ENCODE measurements at regions of chr14 and their contacts with region 1.

Region 1: DNA sequence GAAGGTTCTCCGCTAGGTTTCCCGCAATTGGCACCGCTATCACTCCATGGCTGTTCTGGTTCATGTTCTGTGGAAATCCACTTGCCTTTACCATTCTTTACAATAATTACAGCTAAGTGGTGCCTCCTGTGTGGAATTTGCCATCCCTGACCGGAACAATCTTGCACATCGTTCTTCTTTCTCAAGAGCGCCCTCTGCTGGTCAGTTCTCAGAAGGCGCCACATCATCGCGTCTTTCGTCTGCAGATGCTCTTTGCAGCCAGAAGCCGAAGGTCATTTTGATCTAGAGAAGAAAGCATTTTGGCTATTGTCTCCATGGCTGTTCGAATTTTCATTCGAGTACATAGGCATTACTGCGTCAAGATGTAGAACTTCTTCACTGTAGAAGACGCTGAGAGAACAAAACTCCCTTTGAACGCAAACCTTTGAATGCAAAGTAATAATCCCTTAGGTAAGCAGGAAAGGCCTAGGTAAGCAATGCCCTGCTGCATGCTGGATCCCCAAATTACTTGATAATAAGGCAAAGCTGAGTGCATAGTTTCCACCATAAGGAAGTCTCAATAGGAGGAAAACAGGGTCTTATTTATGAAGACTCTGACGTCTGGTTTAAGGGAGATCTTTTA is 10.1 kb upstream of the RTRAF start:
- DNase-seq: peak; percentile 74 to 86 (median 82)
- ATAC-seq: peak; percentile 60 to 83 (median 80)
- H3K4me3 ChIP-seq: no peak overlapping the region
- H3K27ac ChIP-seq: peak overlapping the region in 6 of 12 donors; percentile 5 to 46 (median 22)
- H3K4me1 ChIP-seq: peaks cover 0 to 15% (median 0%) of the 10 kb centered on the region in 12 donors
- H3K27me3 ChIP-seq: no peaks in the 10 kb centered on the region
- CTCF ChIP-seq: peak; percentile 85 to 98 (median 94)
- POLR2A ChIP-seq: no peak

Region 2: DNA sequence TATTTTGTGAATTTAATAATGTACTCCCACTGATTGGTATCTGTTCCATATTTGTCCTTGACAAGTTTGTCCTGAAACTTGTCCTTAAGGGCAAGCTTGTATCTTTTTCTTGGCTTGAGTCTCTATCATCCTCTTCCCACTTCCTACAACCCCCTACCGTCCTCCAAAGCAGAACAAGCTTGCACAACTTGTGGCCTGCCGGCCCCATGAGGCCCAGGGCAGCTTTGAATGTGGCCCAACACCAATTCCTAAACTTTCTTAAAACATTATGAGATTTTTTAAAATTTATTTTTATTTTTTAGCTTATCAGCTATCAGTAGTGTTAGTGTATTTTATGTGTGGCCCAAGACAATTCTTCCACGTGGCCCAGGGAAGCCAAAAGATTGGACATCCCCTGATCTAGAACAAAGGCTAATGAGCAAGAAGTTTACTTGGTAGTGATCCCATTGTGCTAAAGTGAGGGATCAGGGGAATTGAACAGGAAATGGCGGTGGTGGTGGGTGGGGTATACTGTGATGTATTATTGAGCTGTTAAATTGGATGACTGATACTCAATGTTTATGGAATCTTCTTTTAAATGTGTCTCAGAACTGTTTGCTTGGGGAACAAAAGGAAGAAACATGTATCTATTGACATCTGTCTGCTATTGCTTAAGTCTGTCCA is 701.3 kb before region 1 on chr14:
- intact Hi-C with region 1: loop called in 8 of 10 experiments (anchors 5 to 10 kb)
- DNase-seq: no peak
- ATAC-seq: peak in 1 of 4 donors; percentile 41
- H3K4me3 ChIP-seq: no peak overlapping the region
- H3K27ac ChIP-seq: peak overlapping the region in 1 of 12 donors; percentile 48
- H3K4me1 ChIP-seq: peaks cover 0 to 4% (median 0%) of the 10 kb centered on the region in 12 donors
- H3K27me3 ChIP-seq: no peaks in the 10 kb centered on the region
- CTCF ChIP-seq: no peak
- POLR2A ChIP-seq: no peak

Region 3: DNA sequence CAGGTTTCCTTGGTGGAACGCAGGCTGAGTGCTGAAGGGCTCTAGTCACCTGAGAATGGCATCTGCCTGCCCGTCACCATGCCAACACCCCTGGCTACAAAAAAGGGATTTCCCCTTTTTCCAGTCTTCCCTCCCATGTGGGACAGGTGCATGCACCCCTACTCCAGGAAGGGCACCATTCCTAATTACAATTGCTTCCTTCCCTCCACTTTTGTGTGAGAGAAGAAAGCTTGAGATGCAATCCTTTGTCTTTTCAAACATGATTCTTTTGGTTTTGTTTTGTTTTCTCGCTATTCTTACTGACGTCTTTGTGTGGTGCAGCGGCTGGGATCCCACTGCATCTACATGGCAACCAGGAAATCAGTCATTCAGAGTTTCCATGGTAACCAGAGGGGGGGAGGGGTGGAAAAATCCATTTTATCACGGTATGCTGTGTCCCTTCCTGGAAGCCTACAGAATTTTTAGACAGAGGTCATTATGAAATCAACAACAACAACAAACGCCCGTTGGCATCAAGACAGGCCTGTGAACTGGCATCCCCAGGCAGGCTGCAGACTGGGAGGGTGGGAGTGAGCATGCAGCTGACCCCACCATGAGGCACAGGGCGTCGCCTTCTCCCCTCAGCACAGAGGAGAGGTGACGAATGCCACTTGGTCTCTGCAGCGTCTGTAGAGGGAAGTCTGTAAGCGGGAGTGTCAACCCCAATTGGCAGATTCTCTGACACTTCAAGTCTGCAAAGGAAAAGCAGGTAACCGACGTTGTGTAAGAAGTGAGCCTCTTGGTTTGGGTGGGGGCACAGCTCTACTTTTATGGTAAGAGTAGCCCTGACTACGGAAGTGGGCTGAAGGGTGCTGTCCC is 132.3 kb before region 1 on chr14:
- intact Hi-C with region 1: loop called in 2 of 10 experiments (anchors 5 to 10 kb)
- DNase-seq: peak; percentile 32 to 70 (median 38)
- ATAC-seq: peak; percentile 49 to 85 (median 77)
- H3K4me3 ChIP-seq: peak overlapping the region in 7 of 12 donors; percentile 16 to 54 (median 22)
- H3K27ac ChIP-seq: peak overlapping the region in 8 of 12 donors; percentile 1 to 92 (median 18)
- H3K4me1 ChIP-seq: peaks cover 0 to 47% (median 0%) of the 10 kb centered on the region in 12 donors
- H3K27me3 ChIP-seq: no peaks in the 10 kb centered on the region
- CTCF ChIP-seq: no peak
- POLR2A ChIP-seq: no peak

Region 4: GRCh38 chr14:51852541-51852940 is 126.7 kb before region 1 on chr14:
- intact Hi-C with region 1: loop called in 2 of 10 experiments (anchors 5 to 10 kb)
- DNase-seq: no peak
- ATAC-seq: no peak
- H3K4me3 ChIP-seq: no peak overlapping the region
- H3K27ac ChIP-seq: no peak overlapping the region
- H3K4me1 ChIP-seq: peaks cover 0 to 43% (median 0%) of the 10 kb centered on the region in 12 donors
- H3K27me3 ChIP-seq: no peaks in the 10 kb centered on the region
- CTCF ChIP-seq: no peak
- POLR2A ChIP-seq: no peak

Region 5: DNA sequence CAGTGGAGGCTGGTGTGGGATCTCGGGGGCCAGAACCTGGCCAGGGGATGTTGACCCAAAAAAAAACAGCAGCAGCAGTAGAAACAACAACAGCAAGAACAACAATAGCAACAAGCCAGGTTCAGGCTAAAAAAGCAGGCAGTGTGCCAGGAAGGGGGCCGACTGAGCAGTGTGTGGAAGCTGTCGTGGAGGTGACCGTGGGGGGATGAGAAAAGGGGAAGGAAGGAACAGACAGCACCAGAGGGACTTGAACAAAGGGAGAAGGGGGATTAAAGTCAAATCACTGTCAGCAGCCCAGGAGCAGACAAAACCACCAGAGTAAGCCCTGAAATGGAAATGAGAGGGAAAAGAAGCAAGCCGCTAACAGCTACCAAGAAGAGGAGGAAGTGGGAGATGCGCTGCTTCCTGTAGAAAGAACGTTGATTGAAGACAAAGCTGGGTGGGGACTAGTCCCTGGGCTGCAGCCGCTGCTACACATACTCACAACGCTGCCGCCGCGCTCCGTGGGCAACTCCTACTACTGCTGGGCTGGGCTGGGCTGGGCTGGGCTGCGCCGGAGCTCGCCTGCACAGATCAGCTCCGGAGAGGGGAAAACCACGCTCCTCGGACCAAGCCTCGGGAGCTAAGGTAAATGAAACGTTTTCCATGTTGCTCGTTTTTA is 118.9 kb before region 1 on chr14 and contains the start of gene GNG2:
- intact Hi-C with region 1: loop called in 2 of 10 experiments (anchors 5 to 10 kb)
- DNase-seq: peak; percentile 81 to 93 (median 81)
- ATAC-seq: peak; percentile 96 to 100 (median 99)
- H3K4me3 ChIP-seq: peak within 1 kb of the TSS; percentile 25 to 71 (median 53)
- H3K27ac ChIP-seq: peak within 1 kb of the TSS in 11 of 12 donors; percentile 6 to 89 (median 52)
- H3K4me1 ChIP-seq: peaks cover 0 to 73% (median 7%) of the 10 kb centered on the region in 12 donors
- H3K27me3 ChIP-seq: no peaks in the 10 kb centered on the region
- CTCF ChIP-seq: no peak
- POLR2A ChIP-seq: peak in 1 of 2 donors; percentile 44
- total RNA-seq, gene GNG2: 3.3 to 29.2 (median 7.8) TPM

Measured in heart left ventricle (tissue), 16 donors.